OCI-LY7 (cell line): ENCODE measurements at regions of chr1 and their contacts with region 1.

Region 1: DNA sequence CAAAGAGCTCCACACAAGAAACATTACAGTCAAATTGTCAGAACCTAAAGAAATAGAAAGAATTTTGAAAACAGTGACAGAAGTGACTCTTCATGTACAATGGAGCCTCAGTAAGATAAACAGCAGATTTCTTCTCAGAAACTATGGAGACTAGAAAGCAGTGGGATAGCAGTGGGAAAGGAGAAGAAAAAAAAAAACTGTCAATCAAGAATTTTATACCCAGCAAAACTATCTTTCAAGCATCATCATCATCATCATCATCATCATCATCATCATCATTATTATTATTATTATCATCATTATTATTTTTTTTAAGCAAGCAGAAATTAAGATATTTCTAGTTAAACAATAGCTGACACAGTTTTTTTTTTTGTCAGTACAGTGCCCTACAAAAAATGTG is 24.2 kb downstream of the CEP170 start:
- DNase-seq: peak; percentile 46
- H3K4me3 ChIP-seq: no peak overlapping the region
- H3K27ac ChIP-seq: no peak overlapping the region
- H3K4me1 ChIP-seq: peaks cover 2% of the 10 kb centered on the region
- CTCF ChIP-seq: no peak

Region 2: GRCh38 chr1:243244432-243244841 is 13.5 kb after region 1 on chr1:
- CTCF ChIA-PET with region 1: no interaction called
- POLR2A ChIA-PET with region 1: interaction called, 23 read pairs
- intact Hi-C with region 1: no loop called
- DNase-seq: no peak
- H3K4me3 ChIP-seq: peak overlapping the region; percentile 37
- H3K27ac ChIP-seq: no peak overlapping the region
- H3K4me1 ChIP-seq: peaks cover 33% of the 10 kb centered on the region
- CTCF ChIP-seq: no peak